Psoas muscle (tissue), 8 donors: ENCODE measurements at regions of chr3 and their contacts with region 1.

Region 1: DNA sequence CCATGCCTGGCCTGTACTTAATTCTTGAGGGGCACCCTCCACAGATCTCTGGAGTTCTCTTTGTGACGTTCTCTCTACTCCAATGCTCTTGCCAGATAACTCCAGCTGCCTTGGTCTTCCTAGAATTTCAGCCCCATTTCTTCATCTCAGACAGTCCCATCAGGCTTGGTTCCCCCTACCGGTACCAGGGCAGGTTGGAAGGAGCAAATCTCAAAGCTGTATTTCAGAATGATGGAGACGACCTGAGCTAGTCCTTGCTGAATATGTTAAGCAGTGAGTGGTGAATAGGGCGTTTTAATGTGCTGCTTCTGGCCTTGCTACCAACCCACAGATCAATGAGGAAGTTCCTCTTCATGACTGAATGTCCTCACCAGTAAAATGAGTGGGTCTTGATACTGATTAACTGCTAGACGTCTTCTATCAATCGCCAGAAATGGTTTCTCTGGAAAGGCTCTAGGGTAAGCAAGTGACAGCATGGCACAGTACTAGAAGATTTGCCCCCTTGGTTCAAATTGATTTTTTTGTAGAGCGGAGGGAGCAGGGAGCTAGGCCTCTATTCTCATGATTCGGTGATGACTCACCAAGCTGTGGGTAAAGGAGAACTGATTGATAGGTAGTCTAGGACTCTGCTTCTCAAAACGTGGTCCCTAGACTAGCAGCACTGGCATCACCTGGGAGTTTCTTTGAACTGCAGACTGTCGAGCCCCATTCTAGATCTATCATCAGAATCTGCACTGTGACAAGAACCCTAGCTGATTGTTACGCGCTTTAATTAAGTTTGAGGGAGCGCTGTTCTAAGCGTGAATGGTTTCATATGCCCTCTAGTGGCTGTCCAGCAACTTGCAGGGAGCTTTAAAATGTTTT is 67.8 kb downstream of the UBP1 start:
- DNase-seq: no peak
- ATAC-seq: peak; percentile 51 to 80 (median 63)
- H3K4me3 ChIP-seq: no peak overlapping the region
- H3K27ac ChIP-seq: no peak overlapping the region
- H3K4me1 ChIP-seq: no peaks in the 10 kb centered on the region
- H3K27me3 ChIP-seq: no peaks in the 10 kb centered on the region
- CTCF ChIP-seq: peak; percentile 84

Region 2: DNA sequence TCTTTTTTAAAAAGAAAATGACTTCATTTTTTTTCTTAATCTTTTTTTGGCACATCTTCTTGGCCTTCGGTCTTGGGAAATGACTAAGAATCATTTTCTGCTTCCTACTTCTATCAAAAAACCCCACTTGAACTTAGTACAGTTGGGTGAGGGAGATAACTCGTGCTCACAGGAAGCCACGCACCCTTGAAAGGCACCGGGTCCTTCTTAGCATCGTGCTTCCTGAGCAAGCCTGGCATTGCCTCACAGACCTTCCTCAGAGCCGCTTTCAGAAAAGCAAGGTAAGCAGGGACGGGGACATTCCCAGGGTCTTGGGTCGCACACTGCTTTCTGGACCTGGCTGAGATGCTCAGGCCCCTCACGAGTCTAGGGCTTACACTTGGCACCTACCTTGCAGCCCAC is 421.0 kb before region 1 on chr3 and contains the start of gene CCR4:
- intact Hi-C with region 1: loop called in 1 of 2 experiments (anchors 5 kb)
- DNase-seq: no peak
- ATAC-seq: no peak
- H3K4me3 ChIP-seq: no peak within 1 kb of the TSS
- H3K27ac ChIP-seq: no peak within 1 kb of the TSS
- H3K4me1 ChIP-seq: no peaks in the 10 kb centered on the region
- H3K27me3 ChIP-seq: no peaks in the 10 kb centered on the region
- CTCF ChIP-seq: no peak
- total RNA-seq, gene CCR4: 0.10 TPM in 1 of 4 donors, not detected in the others